ENCODE measurements at regions of chr11 and their contacts with region 1.

Region 1: DNA sequence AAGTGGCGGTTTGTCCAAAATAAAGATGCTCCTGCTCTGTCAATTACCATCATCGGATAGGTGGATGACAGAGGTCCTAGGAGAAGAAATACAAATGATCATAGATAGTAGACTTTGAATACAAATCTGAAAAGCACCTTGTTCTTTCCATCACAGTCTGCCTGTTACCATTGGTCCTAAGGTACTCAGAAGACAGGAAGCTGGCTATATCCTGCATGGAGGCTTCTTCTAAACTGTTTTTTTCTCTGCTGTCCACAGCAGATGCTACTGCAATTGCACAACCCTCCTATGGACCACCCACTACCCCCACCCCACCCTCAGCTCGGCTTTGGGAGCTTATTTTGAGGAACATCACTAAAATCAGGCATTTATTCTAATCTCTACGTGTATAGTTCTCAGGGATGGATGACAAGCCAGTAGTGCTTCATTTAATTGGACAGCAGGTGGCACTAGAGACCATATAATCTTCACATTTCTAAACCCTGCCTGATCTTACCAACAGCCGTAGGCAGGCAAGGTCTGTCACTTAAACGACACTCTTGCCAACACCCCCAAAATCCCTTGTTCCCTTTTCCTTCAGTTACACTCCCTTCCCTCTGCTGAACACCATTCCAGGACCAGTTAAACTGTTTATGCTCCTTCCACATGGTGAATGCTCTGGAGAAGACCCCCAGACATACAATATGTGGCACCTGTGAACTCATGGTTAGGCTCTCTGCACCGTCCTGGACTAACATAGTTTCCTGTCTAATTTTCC is 6.6 kb upstream of the PTS start:
- DNase-seq: peak; percentile 56
- ATAC-seq: peak; percentile 98
- H3K4me3 ChIP-seq: no peak overlapping the region
- H3K27ac ChIP-seq: no peak overlapping the region
- H3K4me1 ChIP-seq: no peaks in the 10 kb centered on the region
- H3K27me3 ChIP-seq: no peaks in the 10 kb centered on the region
- CTCF ChIP-seq: peak; percentile 63 to 88 (median 68); a peak in 4 of 6 replicates
- EP300 ChIP-seq: no peak
- POLR2A ChIP-seq: no peak
- RAD21 ChIP-seq: peak; percentile 80

Region 2: DNA sequence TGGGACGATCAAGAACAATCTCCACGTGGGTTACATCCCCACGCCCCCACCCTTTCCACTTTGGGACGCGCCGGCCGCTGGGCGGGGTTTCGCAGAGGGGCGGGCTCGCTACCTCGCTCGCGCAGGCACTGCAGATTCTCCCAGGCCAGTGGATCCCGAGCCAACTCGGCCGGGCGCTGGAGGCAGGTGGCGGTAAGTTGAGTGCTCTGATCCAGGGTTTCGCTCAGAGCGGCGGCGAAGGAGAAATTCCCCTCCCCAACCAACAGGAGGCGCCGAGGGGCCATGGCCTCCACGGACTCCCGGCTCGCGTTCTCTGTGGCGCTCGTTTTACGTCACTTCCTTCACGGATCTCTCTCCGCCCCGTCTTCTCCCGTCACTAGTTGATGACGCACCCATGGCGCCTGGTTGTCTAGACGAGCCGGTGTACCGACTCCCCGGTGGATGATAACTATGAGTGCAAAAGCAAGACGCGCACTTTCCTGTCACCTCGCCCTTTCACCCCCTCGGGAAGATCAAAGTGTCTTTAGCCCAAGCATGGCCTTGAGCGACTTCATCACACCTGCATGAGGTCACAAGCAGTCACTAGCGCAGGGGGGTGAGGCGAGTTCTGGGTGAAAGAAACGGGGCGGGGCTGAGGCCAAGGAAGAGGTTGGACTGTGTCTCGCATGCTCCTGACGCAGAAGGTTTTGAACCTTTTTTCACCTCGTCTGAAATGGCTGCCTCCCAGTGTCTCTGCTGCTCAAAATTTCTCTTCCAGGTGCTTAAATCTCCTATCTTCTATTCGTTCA is 340.6 kb before region 1 on chr11 and contains the starts of genes CFAP68 and FDXACB1:
- CTCF ChIA-PET with region 1: no interaction called
- POLR2A ChIA-PET with region 1: no interaction called
- RAD21 ChIA-PET with region 1: no interaction called
- SMC1A ChIA-PET with region 1: no interaction called
- in situ Hi-C with region 1: no loop called
- intact Hi-C with region 1: loop called (anchors 10 kb)
- DNase-seq: peak; percentile 93
- ATAC-seq: peak; percentile 94
- H3K4me3 ChIP-seq: peak within 1 kb of the TSS; percentile 94
- H3K27ac ChIP-seq: peak within 1 kb of the TSS; percentile 85
- H3K4me1 ChIP-seq: no peaks in the 10 kb centered on the region
- H3K27me3 ChIP-seq: no peaks in the 10 kb centered on the region
- CTCF ChIP-seq: peak; percentile 96 to 97 (median 97); a peak in 5 of 6 replicates
- EP300 ChIP-seq: peak in 1 of 2 experiments; percentile 63; a peak in 2 of 4 replicates
- POLR2A ChIP-seq: peak; percentile 85
- RAD21 ChIP-seq: peak; percentile 59
- polyA plus RNA-seq, gene CFAP68: 72.7 to 83.7 TPM
- polyA plus RNA-seq, gene FDXACB1: 8.6 to 13.3 TPM

Region 3: GRCh38 chr11:112241486-112241885 is 21.8 kb after region 1 on chr11:
- CTCF ChIA-PET with region 1: no interaction called
- POLR2A ChIA-PET with region 1: no interaction called
- RAD21 ChIA-PET with region 1: no interaction called
- SMC1A ChIA-PET with region 1: no interaction called
- in situ Hi-C with region 1: no loop called
- intact Hi-C with region 1: no loop called
- DNase-seq: no peak
- ATAC-seq: no peak
- H3K4me3 ChIP-seq: no peak overlapping the region
- H3K27ac ChIP-seq: no peak overlapping the region
- H3K4me1 ChIP-seq: no peaks in the 10 kb centered on the region
- H3K27me3 ChIP-seq: no peaks in the 10 kb centered on the region
- CTCF ChIP-seq: no peak
- EP300 ChIP-seq: no peak
- POLR2A ChIP-seq: no peak
- RAD21 ChIP-seq: no peak

Region 4: GRCh38 chr11:112345708-112346107 is 126.1 kb after region 1 on chr11:
- CTCF ChIA-PET with region 1: no interaction called
- POLR2A ChIA-PET with region 1: no interaction called
- RAD21 ChIA-PET with region 1: no interaction called
- SMC1A ChIA-PET with region 1: no interaction called
- in situ Hi-C with region 1: no loop called
- intact Hi-C with region 1: no loop called
- DNase-seq: no peak
- ATAC-seq: peak; percentile 54
- H3K4me3 ChIP-seq: no peak overlapping the region
- H3K27ac ChIP-seq: no peak overlapping the region
- H3K4me1 ChIP-seq: 0 out of 2 replicates have a peak, but pooled peaks cover 4% of the 10 kb centered on the region
- H3K27me3 ChIP-seq: no peaks in the 10 kb centered on the region; a peak in 1 of 4 replicates
- CTCF ChIP-seq: 0 out of 6 replicates have a peak, but pooled peaks of 1 of the 3 experiments have one; percentile 16
- EP300 ChIP-seq: no peak
- POLR2A ChIP-seq: no peak
- RAD21 ChIP-seq: no peak

Region 5: DNA sequence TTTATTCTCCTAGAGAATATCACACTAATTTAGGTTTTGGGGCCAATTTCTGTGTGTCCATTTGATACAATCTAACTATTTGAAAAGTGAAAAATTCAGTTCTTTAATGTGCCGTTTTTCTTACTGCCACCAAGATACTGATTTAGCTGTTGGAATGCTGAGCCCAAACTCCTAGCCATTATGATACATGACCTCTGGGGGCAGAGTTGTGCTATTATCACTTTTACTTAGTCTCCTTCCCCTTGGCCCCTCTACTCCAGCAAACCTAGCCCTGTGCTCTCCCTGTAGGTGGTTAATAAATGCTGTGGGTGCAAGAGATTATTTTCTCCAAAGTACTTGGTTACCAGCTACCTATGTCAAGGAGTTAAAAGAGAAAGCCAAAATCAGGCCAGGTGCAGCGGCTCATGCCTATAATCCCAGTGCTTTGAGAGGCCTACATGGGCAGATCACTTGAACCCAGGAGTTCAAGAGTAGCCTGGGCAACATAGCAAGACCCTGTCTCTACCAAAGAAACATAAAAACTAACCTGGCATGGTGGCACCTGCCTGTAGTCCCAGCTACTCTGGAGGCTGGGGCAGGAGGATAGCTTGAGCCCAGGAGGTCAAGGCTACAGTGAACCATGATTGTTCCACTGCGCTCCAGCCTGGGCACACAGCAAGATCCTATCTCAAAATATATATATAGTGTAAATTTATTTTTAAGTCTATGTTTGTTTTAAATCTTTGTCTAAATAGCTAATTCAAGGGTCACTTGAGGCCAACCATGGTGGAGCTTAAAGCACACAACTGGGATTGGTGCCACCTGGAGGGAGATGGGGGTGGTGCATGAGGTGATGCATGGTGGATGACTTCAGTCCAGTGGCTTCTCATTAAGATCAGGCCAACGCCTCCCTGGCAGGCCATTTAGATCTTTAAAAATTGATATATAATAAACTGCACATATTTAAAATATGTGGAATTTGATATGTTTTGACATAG is 234.2 kb after region 1 on chr11:
- CTCF ChIA-PET with region 1: interaction called, 4 read pairs
- POLR2A ChIA-PET with region 1: no interaction called
- RAD21 ChIA-PET with region 1: no interaction called
- SMC1A ChIA-PET with region 1: no interaction called
- in situ Hi-C with region 1: no loop called
- intact Hi-C with region 1: loop called (anchors 5 kb)
- DNase-seq: no peak
- ATAC-seq: peak; percentile 85
- H3K4me3 ChIP-seq: no peak overlapping the region
- H3K27ac ChIP-seq: no peak overlapping the region
- H3K4me1 ChIP-seq: no peaks in the 10 kb centered on the region
- H3K27me3 ChIP-seq: no peaks in the 10 kb centered on the region
- CTCF ChIP-seq: peak; percentile 34 to 48 (median 43)
- EP300 ChIP-seq: no peak
- POLR2A ChIP-seq: no peak
- RAD21 ChIP-seq: 0 out of 2 replicates have a peak, but pooled peaks have one; percentile 4

Region 6: GRCh38 chr11:112795142-112795815 is 575.6 kb after region 1 on chr11:
- CTCF ChIA-PET with region 1: no interaction called
- POLR2A ChIA-PET with region 1: no interaction called
- RAD21 ChIA-PET with region 1: no interaction called
- SMC1A ChIA-PET with region 1: no interaction called
- in situ Hi-C with region 1: no loop called
- intact Hi-C with region 1: loop called (anchors 10 kb)
- DNase-seq: no peak
- ATAC-seq: peak; percentile 94
- H3K4me3 ChIP-seq: no peak overlapping the region
- H3K27ac ChIP-seq: no peak overlapping the region
- H3K4me1 ChIP-seq: 0 out of 2 replicates have a peak, but pooled peaks cover 3% of the 10 kb centered on the region
- H3K27me3 ChIP-seq: no peaks in the 10 kb centered on the region; a peak in 2 of 4 replicates
- CTCF ChIP-seq: peak; percentile 66 to 77 (median 77)
- EP300 ChIP-seq: no peak
- POLR2A ChIP-seq: no peak
- RAD21 ChIP-seq: peak; percentile 64

Region 7: DNA sequence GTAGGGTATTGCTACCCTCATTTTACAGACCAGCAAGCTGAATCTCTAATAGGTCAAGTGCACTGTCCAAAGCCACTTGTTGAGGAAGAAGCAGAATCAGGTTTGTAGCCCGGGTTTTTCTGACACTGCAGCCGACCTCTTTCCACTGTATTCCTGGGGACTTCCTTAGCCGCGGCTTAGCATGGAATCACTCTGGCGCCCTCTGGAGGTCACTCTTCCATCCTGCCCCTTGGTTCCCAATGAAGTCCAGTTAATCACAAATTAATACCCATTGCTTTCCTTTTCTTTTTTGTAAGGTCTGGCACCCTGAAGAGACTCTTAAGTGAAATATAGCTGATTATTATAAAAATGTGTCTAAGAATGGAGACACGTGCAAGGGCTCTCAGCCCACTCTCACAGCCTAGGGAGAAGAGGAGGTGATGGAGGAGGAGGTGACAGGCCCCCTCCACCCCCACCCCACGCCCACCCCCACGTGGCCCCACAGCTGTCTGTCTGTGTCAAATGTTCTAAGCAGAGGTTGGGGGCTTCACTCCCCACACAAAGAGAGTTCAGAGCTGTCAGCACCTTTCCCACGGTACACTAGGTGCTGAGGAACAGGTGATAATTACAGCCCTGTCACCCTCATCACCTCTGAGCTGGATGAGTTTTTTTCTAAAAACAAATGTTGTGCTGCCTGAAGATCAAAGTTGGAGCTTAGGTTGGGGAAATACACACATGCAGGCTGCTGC is 1313.2 kb after region 1 on chr11:
- CTCF ChIA-PET with region 1: no interaction called
- POLR2A ChIA-PET with region 1: no interaction called
- RAD21 ChIA-PET with region 1: no interaction called
- SMC1A ChIA-PET with region 1: no interaction called
- in situ Hi-C with region 1: no loop called
- intact Hi-C with region 1: loop called (anchors 10 kb)
- DNase-seq: no peak
- ATAC-seq: peak; percentile 81
- H3K4me3 ChIP-seq: no peak overlapping the region
- H3K27ac ChIP-seq: no peak overlapping the region
- H3K4me1 ChIP-seq: no peaks in the 10 kb centered on the region
- H3K27me3 ChIP-seq: no peaks in the 10 kb centered on the region
- CTCF ChIP-seq: peak; percentile 81 to 83 (median 83)
- EP300 ChIP-seq: no peak
- POLR2A ChIP-seq: no peak
- RAD21 ChIP-seq: peak; percentile 79

Measured in GM12878 (cell line).